Activated CD4-positive, alpha-beta T cell treated with anti-CD3 and anti-CD28 coated beads for 36 hours (primary cell): ENCODE measurements at regions of chr7 and their contacts with region 1.

Region 1: GRCh38 chr7:64562626-64563275 is at the start of gene ZNF680:
- DNase-seq: peak; percentile 94
- ATAC-seq: peak; percentile 99
- H3K4me3 Mint-ChIP-seq: peak within 1 kb of the TSS; percentile 99
- H3K27ac Mint-ChIP-seq: peak within 1 kb of the TSS; percentile 100
- H3K4me1 Mint-ChIP-seq: peaks cover 19% of the 10 kb centered on the region
- H3K27me3 Mint-ChIP-seq: no peaks in the 10 kb centered on the region
- total RNA-seq, gene ZNF680: 12.5 to 12.6 TPM

Region 2: DNA sequence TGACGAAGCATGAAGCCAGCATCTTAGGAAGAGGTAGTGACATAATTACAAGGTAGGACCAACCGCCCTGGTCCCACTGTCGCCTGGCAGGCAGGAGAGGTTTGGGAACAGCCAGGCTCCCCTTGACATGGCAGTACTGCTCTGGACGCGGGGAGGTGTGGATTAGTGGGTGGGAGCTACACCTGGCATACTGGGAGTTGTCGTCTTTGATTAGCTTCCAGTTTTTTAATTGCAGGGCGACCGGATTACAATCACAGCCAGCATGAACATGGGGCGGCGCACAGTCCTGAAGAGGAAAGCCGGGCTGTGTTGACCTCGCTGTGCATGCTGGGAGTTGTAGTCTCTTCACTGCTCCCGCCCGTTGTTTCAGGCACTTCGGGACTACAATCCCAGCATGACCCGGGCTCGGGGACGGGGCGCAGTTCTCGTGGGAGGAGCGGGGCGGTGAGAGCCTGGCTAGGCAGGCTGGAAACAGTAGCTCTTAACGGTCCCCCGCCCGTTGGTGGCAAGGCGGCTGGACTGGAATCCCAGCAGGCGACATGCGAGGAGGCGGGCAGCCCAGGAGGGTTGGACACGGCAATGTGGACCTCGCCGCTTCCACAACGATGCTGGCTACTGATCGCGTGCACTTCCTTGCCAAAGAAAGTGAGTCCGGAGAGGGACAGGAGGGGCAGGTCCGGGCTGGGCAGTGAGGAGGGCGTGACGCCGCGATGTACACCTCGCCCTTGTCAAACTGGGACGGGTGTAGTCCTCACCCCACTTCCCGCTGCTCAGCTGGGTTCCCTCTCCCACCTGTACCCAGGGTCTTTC is 662.2 kb before region 1 on chr7:
- CTCF ChIA-PET with region 1: no interaction called
- POLR2A ChIA-PET with region 1: no interaction called
- intact Hi-C with region 1: loop called in 1 of 2 experiments (anchors 1 kb)
- DNase-seq: peak; percentile 96
- ATAC-seq: peak; percentile 96
- H3K4me3 Mint-ChIP-seq: peak overlapping the region; percentile 85
- H3K27ac Mint-ChIP-seq: peak overlapping the region; percentile 77
- H3K4me1 Mint-ChIP-seq: no peaks in the 10 kb centered on the region
- H3K27me3 Mint-ChIP-seq: no peaks in the 10 kb centered on the region

Region 3: DNA sequence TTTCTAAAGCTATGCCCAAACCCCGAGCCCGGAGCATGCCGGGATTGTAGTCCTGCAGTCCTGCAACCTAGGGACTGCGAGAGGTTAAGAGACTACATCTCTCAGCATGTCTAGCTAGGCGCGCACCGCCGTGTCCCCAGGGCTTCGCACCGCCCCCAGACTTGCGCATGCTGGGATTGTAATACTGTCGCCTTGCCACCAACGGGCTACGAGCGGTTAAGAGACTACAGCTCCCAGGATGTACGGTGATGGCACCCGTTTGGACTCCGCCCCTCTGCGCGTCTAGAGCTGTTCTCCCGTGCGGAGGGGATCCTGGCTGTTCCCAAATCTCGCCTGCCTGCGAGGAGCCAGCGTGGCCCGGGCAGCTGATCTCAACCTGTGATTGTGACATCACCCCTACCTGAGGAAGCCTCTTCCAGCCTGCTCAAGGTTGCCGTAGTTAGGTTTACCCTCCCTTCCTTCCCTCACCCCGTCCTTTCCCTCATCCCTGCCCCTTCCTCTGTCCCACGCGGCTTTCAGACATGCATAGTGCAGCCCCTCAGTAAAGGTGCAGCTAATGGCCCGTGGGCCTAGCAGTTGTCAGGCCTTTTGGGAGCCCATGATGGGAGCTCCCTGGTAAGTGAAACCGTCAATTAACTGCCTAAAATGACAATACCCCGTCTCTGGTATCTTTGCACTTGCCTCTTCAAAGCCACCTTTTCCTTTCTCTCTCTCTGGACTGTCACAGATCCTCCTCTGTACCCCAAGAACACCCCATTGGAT is 255.3 kb before region 1 on chr7:
- CTCF ChIA-PET with region 1: no interaction called
- POLR2A ChIA-PET with region 1: interaction called, 6 read pairs
- intact Hi-C with region 1: loop called in 1 of 2 experiments (anchors 2 kb)
- DNase-seq: peak; percentile 95
- ATAC-seq: peak; percentile 97
- H3K4me3 Mint-ChIP-seq: peak overlapping the region; percentile 84
- H3K27ac Mint-ChIP-seq: peak overlapping the region; percentile 91
- H3K4me1 Mint-ChIP-seq: peaks cover 25% of the 10 kb centered on the region
- H3K27me3 Mint-ChIP-seq: no peaks in the 10 kb centered on the region

Region 4: DNA sequence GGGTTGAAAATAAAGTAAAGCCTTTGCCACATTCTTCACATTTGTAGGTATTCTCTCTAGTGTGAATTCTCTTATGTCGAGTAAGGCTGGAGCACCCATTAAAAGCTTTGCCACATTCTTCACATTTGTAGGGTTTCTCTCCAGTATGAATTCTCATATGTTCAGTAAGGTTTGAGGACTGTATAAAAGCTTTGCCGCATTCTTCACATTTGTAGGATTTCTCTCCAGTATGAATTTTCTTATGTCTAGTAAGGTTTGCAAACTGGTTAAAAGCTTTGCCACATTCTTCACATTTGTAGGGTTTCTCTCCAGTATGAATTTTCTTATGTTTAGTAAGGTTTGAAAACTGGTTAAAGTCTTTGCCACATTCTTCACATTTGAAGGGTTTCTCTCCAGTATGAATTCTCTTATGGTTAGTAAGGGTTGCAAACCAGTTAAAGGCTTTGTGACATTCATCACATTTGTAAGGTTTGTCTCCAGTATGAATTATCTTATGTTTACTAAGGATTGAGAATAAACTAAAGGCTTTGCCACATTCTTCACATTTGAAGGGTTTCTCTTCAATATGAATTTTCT is 41.3 kb before region 1 on chr7:
- CTCF ChIA-PET with region 1: no interaction called
- POLR2A ChIA-PET with region 1: no interaction called
- intact Hi-C with region 1: loop called in 1 of 2 experiments (anchors 5 kb)
- DNase-seq: no peak
- ATAC-seq: no peak
- H3K4me3 Mint-ChIP-seq: no peak overlapping the region
- H3K27ac Mint-ChIP-seq: no peak overlapping the region
- H3K4me1 Mint-ChIP-seq: no peaks in the 10 kb centered on the region
- H3K27me3 Mint-ChIP-seq: no peaks in the 10 kb centered on the region

Region 5: GRCh38 chr7:64794171-64794844 is 231.6 kb after region 1 on chr7 and contains the start of gene ZNF138:
- CTCF ChIA-PET with region 1: no interaction called
- POLR2A ChIA-PET with region 1: no interaction called
- intact Hi-C with region 1: loop called (anchors 5 to 10 kb)
- DNase-seq: peak; percentile 97
- ATAC-seq: peak; percentile 100
- H3K4me3 Mint-ChIP-seq: peak within 1 kb of the TSS; percentile 97
- H3K27ac Mint-ChIP-seq: peak within 1 kb of the TSS; percentile 99
- H3K4me1 Mint-ChIP-seq: peaks cover 23% of the 10 kb centered on the region
- H3K27me3 Mint-ChIP-seq: no peaks in the 10 kb centered on the region
- total RNA-seq, gene ZNF138: 12.0 to 19.6 TPM

Region 6: DNA sequence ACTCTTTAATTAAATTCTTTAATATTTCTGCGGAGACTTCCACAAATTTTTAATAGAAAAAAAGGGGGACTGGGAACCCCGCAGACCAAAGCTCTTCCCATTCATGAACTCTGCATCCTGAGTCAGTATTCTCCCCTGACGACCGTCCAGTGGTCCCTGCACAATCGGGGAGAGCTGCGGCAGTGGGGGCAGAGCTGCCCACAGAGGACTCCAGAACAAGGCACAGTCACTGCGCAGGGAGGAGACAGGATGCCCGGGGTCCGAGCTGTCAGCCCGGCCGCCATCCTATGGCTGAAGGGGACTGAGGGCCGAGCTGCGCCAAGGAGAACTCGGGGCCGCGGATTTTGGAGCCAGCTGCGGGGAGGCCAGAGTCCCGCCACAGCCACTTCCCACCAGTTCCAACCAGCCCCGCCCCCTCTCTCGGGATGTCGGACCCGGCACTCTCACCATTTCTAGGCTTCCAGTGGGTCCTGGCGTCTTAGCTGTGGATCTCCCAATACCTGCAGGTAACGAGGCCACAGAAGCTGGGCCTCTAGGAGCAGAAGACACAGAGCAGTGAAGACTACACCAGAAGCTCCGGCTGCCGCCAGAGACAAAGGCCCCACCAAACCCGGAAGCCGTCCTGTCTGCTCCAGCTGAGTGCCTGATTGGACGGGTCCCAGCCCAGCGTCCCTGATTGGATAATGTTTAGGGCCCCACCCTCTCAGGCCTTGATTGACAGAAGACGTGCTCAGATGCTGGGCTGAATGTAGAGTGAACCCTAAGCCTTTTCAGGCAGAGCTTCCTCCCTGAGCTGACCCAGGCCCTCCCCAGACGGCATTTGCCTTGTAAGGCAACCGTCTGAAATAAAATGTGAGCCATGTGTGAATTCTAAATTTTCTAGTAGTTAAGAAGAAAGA is 443.6 kb after region 1 on chr7 and contains the start of gene ERV3-1:
- CTCF ChIA-PET with region 1: no interaction called
- POLR2A ChIA-PET with region 1: interaction called, 4 read pairs
- intact Hi-C with region 1: loop called in 1 of 2 experiments (anchors 10 kb)
- DNase-seq: peak; percentile 95
- ATAC-seq: peak; percentile 100
- H3K4me3 Mint-ChIP-seq: peak within 1 kb of the TSS; percentile 94
- H3K27ac Mint-ChIP-seq: peak within 1 kb of the TSS; percentile 92
- H3K4me1 Mint-ChIP-seq: peaks cover 27% of the 10 kb centered on the region
- H3K27me3 Mint-ChIP-seq: no peaks in the 10 kb centered on the region
- total RNA-seq, gene ERV3-1: 6.3 to 8.9 TPM